ENCODE measurements at regions of chr13 and their contacts with region 1.

Region 1: GRCh38 chr13:21528621-21529020 is 69.5 kb upstream of the ZDHHC20 start:
- DNase-seq: no peak
- ATAC-seq: no peak
- H3K4me3 ChIP-seq: no peak overlapping the region
- H3K4me3 Mint-ChIP-seq: no peak overlapping the region
- H3K27ac ChIP-seq: no peak overlapping the region
- H3K27ac Mint-ChIP-seq: no peak overlapping the region
- H3K4me1 ChIP-seq: peaks cover 0 to 14% of the 10 kb centered on the region in 2 experiments
- H3K4me1 Mint-ChIP-seq: peaks cover 11 to 22% (median 21%) of the 10 kb centered on the region in 3 donors
- H3K27me3 ChIP-seq: no peaks in the 10 kb centered on the region
- H3K27me3 Mint-ChIP-seq: no peaks in the 10 kb centered on the region

Region 2: DNA sequence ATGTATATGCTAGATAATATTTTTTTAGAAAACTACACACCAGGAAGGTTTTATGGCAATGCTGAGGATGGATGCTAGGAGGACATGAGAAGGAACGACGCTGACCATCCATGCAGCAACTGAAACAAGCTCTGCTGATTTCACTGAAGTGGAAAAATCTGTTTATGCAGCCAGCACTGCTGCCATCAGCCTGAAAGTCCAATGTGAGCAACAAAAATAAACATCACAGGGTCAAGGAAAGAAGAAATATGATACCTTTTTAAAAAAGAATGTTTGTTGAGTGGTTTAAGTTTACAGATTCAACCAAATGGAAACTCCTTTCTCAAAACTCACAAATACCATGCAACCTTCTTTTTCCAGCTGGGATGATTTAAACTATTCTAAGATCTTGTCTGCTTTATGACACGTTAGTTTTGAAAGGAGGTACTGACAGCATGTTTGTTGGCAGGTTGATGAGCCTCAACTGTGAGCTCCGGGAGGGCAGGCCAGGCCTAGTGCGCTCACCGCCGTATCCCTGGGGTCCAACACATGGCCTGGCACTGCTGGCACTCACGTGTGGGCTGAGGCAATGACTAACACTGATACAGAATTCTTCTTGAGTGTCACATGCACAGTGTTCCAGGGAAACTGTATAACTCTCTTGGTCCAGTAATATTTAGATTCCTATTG is 514.0 kb before region 1 on chr13:
- CTCF ChIA-PET with region 1: no interaction called
- POLR2A ChIA-PET with region 1: no interaction called
- DNase-seq: no peak
- ATAC-seq: no peak
- H3K4me3 ChIP-seq: no peak overlapping the region
- H3K4me3 Mint-ChIP-seq: no peak overlapping the region
- H3K27ac ChIP-seq: no peak overlapping the region
- H3K27ac Mint-ChIP-seq: no peak overlapping the region
- H3K4me1 ChIP-seq: peaks cover 0 to 3% of the 10 kb centered on the region in 2 experiments
- H3K4me1 Mint-ChIP-seq: peaks cover 5 to 30% (median 26%) of the 10 kb centered on the region in 3 donors
- H3K27me3 ChIP-seq: no peaks in the 10 kb centered on the region
- H3K27me3 Mint-ChIP-seq: no peaks in the 10 kb centered on the region

Region 3: GRCh38 chr13:21567714-21568113 is 39.1 kb after region 1 on chr13:
- CTCF ChIA-PET with region 1: interaction called in 1 of 2 experiments, 3 read pairs
- POLR2A ChIA-PET with region 1: interaction called in 1 of 2 experiments, 10 read pairs
- DNase-seq: no peak
- ATAC-seq: no peak
- H3K4me3 ChIP-seq: no peak overlapping the region
- H3K4me3 Mint-ChIP-seq: no peak overlapping the region
- H3K27ac ChIP-seq: no peak overlapping the region
- H3K27ac Mint-ChIP-seq: no peak overlapping the region
- H3K4me1 ChIP-seq: no peaks in the 10 kb centered on the region
- H3K4me1 Mint-ChIP-seq: peaks cover 30 to 38% (median 35%) of the 10 kb centered on the region in 3 donors
- H3K27me3 ChIP-seq: no peaks in the 10 kb centered on the region
- H3K27me3 Mint-ChIP-seq: no peaks in the 10 kb centered on the region

Region 4: GRCh38 chr13:22793598-22794134 is 1265.0 kb after region 1 on chr13:
- CTCF ChIA-PET with region 1: interaction called in 1 of 2 experiments, 14 read pairs
- POLR2A ChIA-PET with region 1: no interaction called
- DNase-seq: no peak
- ATAC-seq: no peak
- H3K4me3 ChIP-seq: no peak overlapping the region
- H3K4me3 Mint-ChIP-seq: no peak overlapping the region
- H3K27ac ChIP-seq: no peak overlapping the region
- H3K27ac Mint-ChIP-seq: no peak overlapping the region
- H3K4me1 ChIP-seq: no peaks in the 10 kb centered on the region
- H3K4me1 Mint-ChIP-seq: no peaks in the 10 kb centered on the region
- H3K27me3 ChIP-seq: no peaks in the 10 kb centered on the region
- H3K27me3 Mint-ChIP-seq: peaks cover 7 to 12% of the 10 kb centered on the region in 2 donors

Measured in T-cell (primary cell).